ENCODE measurements at regions of chr17 and their contacts with region 1.

Region 1: GRCh38 chr17:14004927-14005620 is 64.2 kb upstream of the COX10 start:
- DNase-seq: no peak
- H3K4me3 ChIP-seq: no peak overlapping the region
- H3K27ac ChIP-seq: no peak overlapping the region
- H3K4me1 ChIP-seq: no peaks in the 10 kb centered on the region
- H3K27me3 ChIP-seq: no peaks in the 10 kb centered on the region
- CTCF ChIP-seq: no peak
- EP300 ChIP-seq: no peak
- POLR2A ChIP-seq: no peak

Region 2: GRCh38 chr17:13584701-13585080 is 420.4 kb before region 1 on chr17:
- intact Hi-C with region 1: loop called in 1 of 4 experiments (anchors 5 kb)
- DNase-seq: no peak
- H3K4me3 ChIP-seq: no peak overlapping the region
- H3K27ac ChIP-seq: no peak overlapping the region
- H3K4me1 ChIP-seq: no peaks in the 10 kb centered on the region
- H3K27me3 ChIP-seq: no peaks in the 10 kb centered on the region
- CTCF ChIP-seq: no peak
- EP300 ChIP-seq: no peak
- POLR2A ChIP-seq: no peak

Region 3: GRCh38 chr17:13785981-13786598 is 219.0 kb before region 1 on chr17:
- intact Hi-C with region 1: no loop called
- DNase-seq: peak in 2 of 5 donors; percentile 19 to 35
- H3K4me3 ChIP-seq: no peak overlapping the region
- H3K27ac ChIP-seq: no peak overlapping the region
- H3K4me1 ChIP-seq: peaks cover 4% of the 10 kb centered on the region
- H3K27me3 ChIP-seq: no peaks in the 10 kb centered on the region
- CTCF ChIP-seq: no peak
- EP300 ChIP-seq: no peak
- POLR2A ChIP-seq: no peak

Region 4: DNA sequence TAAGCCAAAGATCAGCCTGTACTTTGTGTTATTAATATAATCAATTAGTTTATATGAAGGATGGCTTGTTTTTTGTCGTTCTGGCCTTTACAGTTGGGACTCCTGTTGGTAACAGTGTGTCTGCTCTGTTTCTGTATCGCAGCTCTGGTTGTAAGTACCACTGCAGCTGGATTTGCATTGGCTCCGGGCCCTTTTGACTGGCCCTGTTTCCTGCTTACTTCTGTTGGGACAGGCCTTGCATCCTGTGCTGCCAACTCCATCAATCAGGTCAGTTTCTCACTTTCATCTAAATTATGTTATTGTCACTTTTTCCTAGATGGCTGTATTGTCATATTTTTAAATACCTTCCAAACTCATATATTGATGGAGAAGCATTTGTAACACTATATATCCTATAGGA is 96.9 kb after region 1 on chr17:
- intact Hi-C with region 1: no loop called
- DNase-seq: no peak
- H3K4me3 ChIP-seq: no peak overlapping the region
- H3K27ac ChIP-seq: no peak overlapping the region
- H3K4me1 ChIP-seq: peaks cover 3% of the 10 kb centered on the region
- H3K27me3 ChIP-seq: no peaks in the 10 kb centered on the region
- CTCF ChIP-seq: no peak
- EP300 ChIP-seq: no peak
- POLR2A ChIP-seq: no peak

Region 5: DNA sequence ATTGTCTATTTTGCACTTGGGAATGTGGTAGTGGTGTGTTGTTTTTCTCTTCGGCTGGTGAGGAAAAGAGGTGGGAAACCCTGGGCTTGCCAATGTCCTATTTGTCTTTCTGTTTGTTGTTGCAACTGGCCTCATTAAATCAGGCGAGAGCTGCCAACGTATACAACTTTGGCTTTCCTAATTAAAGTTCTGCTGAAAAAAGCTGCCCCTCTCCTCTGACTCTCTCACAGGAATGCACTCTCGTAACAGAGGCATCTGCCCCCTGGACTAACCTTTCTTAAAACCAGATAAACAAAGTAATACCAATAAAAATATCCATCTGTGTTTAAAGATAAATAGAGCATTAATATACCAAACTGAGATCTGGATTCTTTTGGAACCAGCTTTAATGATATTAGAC is 223.8 kb after region 1 on chr17:
- intact Hi-C with region 1: no loop called
- DNase-seq: no peak
- H3K4me3 ChIP-seq: no peak overlapping the region
- H3K27ac ChIP-seq: no peak overlapping the region
- H3K4me1 ChIP-seq: peaks cover 2% of the 10 kb centered on the region
- H3K27me3 ChIP-seq: no peaks in the 10 kb centered on the region
- CTCF ChIP-seq: no peak
- EP300 ChIP-seq: no peak
- POLR2A ChIP-seq: no peak

Region 6: DNA sequence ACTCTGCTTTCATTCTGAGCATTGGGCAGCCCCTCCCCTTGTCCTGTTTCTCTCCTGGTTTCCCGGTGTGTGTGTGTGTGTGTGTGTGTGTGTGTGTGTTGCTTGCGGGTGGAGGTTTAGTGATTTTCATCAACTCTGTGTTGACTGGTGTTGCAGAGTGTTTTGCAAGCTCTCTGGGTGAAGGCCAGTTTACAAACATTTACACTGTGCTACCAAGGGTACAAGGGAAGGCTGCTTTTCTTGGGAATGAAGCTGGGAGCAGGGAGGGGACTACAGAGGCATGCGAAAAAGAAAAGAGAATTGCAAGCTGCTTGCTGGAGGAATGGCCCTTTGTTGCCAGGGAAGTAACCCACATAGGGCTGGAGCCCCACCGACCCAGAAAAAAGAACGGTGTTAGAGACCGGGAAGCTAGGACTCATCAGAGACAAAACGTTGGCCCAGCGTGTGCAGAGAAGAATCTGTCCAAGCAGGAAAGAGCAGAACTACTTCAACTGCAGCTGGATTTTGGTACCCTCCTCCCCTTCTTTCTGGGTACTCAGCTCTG is 325.5 kb after region 1 on chr17:
- intact Hi-C with region 1: no loop called
- DNase-seq: peak in 2 of 5 donors; percentile 21 to 41
- H3K4me3 ChIP-seq: no peak overlapping the region
- H3K27ac ChIP-seq: no peak overlapping the region
- H3K4me1 ChIP-seq: peaks cover 4% of the 10 kb centered on the region
- H3K27me3 ChIP-seq: no peaks in the 10 kb centered on the region
- CTCF ChIP-seq: no peak
- EP300 ChIP-seq: no peak
- POLR2A ChIP-seq: no peak